HepG2 (cell line): ENCODE measurements at regions of chr12 and their contacts with region 1.

Region 1: DNA sequence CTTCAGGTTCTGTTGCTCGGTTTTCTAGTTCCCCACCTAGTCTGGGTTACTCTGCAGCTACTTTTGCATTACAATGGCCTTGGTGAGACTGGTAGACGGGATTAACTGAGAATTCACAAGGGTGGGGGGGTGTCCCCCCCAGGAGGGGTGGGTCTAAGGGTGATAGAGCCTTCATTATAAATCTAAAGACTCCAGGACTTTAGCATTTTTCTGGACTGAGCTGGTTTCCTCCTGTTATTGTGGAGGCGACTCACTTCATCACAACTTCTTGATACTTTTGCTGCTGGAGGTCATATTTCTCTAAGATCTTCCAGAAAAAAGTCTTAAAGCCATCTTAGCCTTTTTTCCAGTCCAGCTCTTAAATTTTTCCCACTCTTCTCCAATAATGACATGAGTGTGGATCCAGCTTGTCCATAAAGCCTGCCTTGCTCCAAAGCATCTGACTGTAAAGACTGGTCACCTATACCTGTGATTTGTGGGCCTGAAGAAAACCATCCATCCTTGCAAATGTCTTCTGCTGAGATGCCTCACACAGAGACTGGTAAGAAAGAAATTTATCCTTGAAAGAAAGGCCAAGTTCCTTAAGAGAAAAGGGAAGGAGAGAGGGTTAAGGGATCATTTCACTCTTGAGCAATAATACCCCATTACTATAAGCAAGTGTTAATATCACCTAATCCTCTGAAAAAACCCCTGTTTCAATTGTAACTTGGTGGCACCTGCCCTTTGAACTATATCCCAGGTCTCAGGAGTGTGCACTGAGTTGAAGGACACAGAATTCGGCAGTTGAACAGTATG is 19.7 kb upstream of the SLC2A14 start:
- DNase-seq: no peak
- ATAC-seq: no peak
- H3K4me3 ChIP-seq: no peak overlapping the region
- H3K27ac ChIP-seq: peak overlapping the region; percentile 99
- H3K4me1 ChIP-seq: peaks cover 64% of the 10 kb centered on the region
- H3K27me3 ChIP-seq: no peaks in the 10 kb centered on the region; a peak in 1 of 5 replicates
- CTCF ChIP-seq: no peak
- EP300 ChIP-seq: no peak
- POLR2A ChIP-seq: no peak
- RAD21 ChIP-seq: no peak

Region 2: GRCh38 chr12:7907009-7907408 is 14.6 kb after region 1 on chr12:
- CTCF ChIA-PET with region 1: no interaction called
- POLR2A ChIA-PET with region 1: interaction called, 58 read pairs
- in situ Hi-C with region 1: no loop called
- intact Hi-C with region 1: loop called (anchors 1 kb)
- DNase-seq: peak; percentile 97
- ATAC-seq: peak; percentile 97
- H3K4me3 ChIP-seq: no peak overlapping the region
- H3K27ac ChIP-seq: peak overlapping the region; percentile 78
- H3K4me1 ChIP-seq: peaks cover 48% of the 10 kb centered on the region
- H3K27me3 ChIP-seq: no peaks in the 10 kb centered on the region
- CTCF ChIP-seq: peak; percentile 82
- EP300 ChIP-seq: peak in 1 of 2 experiments; percentile 90; a peak in 2 of 4 replicates
- POLR2A ChIP-seq: no peak
- RAD21 ChIP-seq: no peak